ENCODE measurements at regions of chr11 and their contacts with region 1.

Region 1: GRCh38 chr11:75388386-75389275 is 10.7 kb upstream of the RPS3 start:
- DNase-seq: peak; percentile 75
- CTCF ChIP-seq: peak; percentile 80

Region 2: DNA sequence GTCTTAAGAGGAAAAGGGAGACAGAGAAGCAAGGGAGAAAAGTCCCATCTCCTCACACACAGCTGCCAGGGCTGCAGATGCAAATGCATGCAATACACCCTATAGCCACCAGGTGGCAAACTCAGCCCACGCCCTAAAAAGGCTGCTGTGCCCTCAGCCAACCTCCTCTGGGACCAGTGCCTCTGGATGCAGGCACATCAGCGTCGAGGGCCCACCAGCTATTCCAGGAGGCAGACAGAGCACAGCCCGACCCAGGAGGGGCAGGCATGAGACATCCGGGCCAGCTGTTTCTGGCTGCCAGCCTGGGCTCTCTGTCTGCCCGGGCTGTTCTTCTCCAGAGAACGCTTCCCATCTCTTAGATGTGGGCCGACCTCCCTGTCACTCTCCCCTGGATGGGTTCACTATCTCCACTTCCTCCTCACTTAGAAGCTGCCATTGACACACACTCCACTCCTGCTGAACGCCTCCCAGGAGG is 108.4 kb before region 1 on chr11:
- CTCF ChIA-PET with region 1: interaction called, 224 read pairs
- POLR2A ChIA-PET with region 1: no interaction called
- DNase-seq: peak; percentile 86
- CTCF ChIP-seq: peak; percentile 94

Region 3: DNA sequence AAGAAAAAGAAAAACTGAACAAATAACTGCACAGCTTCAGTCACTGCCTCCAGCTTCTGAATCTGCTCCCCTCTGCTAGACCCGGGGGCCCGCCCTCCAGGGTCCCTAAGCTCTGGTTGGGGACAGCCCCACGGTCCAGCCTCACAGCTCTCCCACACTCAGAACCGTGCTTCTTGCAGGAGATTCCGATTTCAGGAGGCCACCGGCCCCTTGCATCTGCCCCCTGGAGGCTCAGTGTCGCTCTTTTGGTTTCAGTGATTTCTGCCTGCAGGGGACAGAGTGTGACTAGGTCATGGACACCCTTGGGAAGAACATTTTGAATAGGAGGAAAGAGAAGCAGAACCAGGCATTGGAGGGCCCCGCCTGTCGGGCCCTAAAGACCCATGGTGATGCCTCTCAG is 12.5 kb before region 1 on chr11:
- CTCF ChIA-PET with region 1: interaction called, 10 read pairs
- POLR2A ChIA-PET with region 1: no interaction called
- DNase-seq: no peak
- CTCF ChIP-seq: no peak

Region 4: DNA sequence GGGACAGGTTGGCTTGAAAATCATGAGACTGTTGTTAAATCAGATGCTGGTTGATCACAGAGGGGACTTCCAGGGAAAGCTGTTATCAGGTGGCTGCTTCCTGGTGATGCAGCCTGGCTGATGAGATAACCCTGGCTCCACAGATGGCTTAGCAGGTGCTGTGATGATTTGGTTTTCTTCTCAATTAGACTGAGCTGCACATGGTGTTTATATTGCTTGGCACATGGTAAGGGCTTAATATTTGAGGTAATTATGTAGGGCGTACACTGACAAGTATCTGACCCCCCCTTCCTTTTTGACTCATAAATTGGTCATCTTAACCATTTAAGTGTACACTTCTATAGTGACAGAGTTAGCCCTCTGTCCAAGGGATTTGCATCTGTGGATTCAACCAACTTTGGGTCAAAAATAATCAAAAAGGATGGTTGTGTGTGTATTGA is 17.7 kb after region 1 on chr11:
- CTCF ChIA-PET with region 1: interaction called, 17 read pairs
- POLR2A ChIA-PET with region 1: interaction called, 6 read pairs
- DNase-seq: no peak
- CTCF ChIP-seq: no peak

Region 5: DNA sequence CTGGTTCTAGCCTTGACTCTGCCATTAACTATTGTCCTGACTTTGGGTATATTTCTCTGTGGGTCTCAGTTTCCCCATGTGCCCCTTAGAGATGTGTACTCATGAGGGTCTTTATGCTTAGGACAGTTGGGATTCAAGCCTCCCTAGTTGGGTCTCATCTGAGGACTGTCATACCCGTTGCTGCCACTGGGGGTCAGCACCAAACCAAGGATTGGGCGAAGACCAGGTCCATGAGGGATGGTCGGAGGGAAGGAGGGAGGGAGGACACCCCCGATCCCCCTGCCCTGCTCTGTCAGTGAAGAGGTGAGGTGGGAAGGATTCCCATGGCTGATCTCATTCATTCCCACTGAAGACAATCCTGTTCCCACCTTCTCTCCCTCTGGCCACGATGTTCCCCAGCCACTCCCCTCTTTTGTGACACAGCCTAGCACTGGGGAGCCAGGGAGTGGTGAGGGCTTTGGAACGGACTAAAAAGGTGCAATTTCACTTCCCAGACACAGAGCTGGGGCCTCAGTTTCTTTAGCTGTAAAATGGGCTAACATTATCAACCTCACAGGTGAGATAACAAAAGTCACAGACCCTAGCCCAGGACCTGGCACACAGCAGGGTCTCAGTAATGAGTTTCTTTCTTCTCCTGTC is 56.8 kb after region 1 on chr11:
- CTCF ChIA-PET with region 1: interaction called, 17 read pairs
- POLR2A ChIA-PET with region 1: no interaction called
- DNase-seq: peak; percentile 80
- CTCF ChIP-seq: peak; percentile 97